ENCODE measurements at regions of chr1 and their contacts with region 1.

Region 1: GRCh38 chr1:176837708-176838107 is 326.8 kb downstream of the ASTN1 start:
- DNase-seq: no peak
- H3K4me3 Mint-ChIP-seq: no peak overlapping the region
- H3K27ac Mint-ChIP-seq: no peak overlapping the region
- H3K4me1 Mint-ChIP-seq: no peaks in the 10 kb centered on the region
- H3K27me3 Mint-ChIP-seq: peaks cover 2% of the 10 kb centered on the region

Region 2: DNA sequence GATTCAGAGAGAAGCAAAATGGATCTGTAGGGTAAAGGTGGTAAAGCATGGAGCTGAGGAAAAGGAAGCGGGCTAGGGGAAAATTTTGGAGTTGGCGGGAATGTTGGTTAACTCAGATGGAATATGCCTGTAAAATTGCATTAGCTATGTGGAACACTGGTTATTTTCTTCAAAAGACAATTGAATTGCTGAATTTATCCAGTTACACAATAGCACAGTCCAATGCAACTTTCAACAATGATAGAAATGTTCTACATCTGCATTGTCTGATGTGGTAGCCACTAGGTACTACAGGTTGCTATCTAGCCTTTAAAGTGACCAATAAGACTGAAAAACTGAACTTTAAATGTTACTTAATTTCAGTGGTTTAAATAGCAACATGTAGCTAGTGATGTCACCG is 11.6 kb after region 1 on chr1:
- CTCF ChIA-PET with region 1: no interaction called
- POLR2A ChIA-PET with region 1: no interaction called
- intact Hi-C with region 1: loop called (anchors 1 kb)
- DNase-seq: no peak
- H3K4me3 Mint-ChIP-seq: no peak overlapping the region
- H3K27ac Mint-ChIP-seq: no peak overlapping the region
- H3K4me1 Mint-ChIP-seq: no peaks in the 10 kb centered on the region
- H3K27me3 Mint-ChIP-seq: no peaks in the 10 kb centered on the region